AG04449 (cell line): ENCODE measurements at regions of chr6 and their contacts with region 1.

Region 1: GRCh38 chr6:6724539-6725467 is 136.3 kb downstream of the LY86 start:
- DNase-seq: peak; percentile 26
- H3K4me3 ChIP-seq: peak overlapping the region; percentile 47
- CTCF ChIP-seq: peak; percentile 72

Region 2: GRCh38 chr6:6414931-6415330 is 309.9 kb before region 1 on chr6:
- CTCF ChIA-PET with region 1: no interaction called
- POLR2A ChIA-PET with region 1: no interaction called
- DNase-seq: no peak
- H3K4me3 ChIP-seq: no peak overlapping the region
- CTCF ChIP-seq: no peak

Region 3: DNA sequence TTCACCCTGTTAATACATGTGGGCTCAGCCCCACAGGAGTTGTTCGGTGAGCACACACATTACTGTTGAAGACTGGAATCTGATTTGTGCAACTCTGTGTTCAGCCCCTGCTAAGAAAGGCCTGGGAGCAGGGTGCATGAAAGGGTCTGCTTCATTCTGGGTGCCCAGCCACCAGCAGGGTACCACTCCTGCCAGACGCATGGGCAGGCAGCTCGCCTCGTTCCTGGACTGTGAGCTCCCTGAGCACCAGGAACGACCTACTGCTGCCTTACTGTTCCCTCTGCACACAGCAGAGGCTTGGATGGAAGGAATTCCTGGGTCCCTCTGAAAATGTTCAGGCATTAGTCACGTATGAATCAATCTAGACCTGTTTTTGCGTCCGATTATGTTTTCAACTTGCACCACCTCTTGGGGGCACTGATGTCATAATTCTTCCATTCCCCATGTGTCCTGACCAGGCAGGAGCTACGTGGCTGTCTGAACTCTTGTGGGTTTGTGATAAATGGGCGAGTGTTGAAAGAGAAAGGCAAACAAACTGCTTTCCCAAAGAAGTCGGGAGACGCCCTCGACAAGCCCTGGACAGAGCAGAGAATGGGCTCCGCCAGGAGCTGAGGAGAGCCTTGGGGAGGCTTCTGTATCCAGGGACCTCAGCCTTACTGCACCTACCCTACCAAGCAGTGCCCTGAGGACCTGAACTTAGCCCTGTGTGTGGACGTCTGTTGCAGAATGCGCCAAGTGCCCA is 12.4 kb before region 1 on chr6:
- CTCF ChIA-PET with region 1: interaction called, 35 read pairs
- POLR2A ChIA-PET with region 1: no interaction called
- DNase-seq: peak; percentile 50
- H3K4me3 ChIP-seq: no peak overlapping the region; the same call in 1 of the 2 replicates
- CTCF ChIP-seq: no peak